Aorta (tissue), 5 donors: ENCODE measurements at regions of chr11 and their contacts with region 1.

Region 1: DNA sequence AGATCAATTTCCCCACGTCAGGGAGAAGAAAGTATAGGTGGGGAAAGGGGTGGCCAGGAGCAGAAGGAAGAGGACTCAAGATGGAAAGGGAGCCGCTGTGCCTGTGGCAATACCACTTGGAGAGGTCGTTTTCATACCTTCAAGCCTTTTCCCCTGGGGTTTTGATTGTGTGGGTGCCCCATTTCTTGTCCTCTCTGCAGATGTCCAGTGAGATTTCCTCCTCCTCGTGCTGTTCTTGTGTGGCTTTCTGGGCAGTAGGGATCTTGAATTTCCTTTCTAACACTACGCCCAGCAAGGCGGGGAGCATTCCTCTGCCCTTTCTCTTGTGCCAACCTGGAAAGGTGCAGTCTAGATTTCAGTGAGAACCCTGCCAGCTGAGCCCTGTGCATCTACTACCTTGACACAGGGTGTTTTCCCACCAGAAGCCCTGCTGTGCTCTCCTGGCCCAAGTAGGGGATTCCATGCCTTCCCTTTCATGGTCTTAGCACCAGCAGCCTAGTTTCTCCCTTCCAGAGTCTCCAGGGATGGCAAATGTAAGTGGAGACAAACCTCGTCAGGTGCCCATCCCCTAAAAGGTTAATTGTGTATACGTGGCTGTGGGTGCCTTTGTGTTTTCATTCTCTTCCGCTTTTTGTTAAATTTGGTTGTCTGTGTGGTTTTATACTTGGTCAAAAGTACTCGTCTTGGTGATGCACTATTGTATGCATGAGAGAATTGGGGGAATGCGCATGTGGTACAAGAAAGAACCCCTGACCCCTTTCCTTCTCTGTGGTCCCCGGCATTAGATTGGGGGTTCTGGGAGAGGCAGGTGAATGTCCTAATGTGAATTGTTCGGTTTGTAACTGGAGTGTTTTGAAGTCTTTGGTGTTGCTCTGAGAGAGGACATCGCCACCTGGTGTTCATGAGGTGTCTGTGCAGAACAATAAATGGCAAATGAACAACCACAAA is 71.4 kb upstream of the MPEG1 start:
- DNase-seq: no peak
- ATAC-seq: peak; percentile 85
- H3K4me3 ChIP-seq: no peak overlapping the region
- H3K27ac ChIP-seq: no peak overlapping the region
- H3K4me1 ChIP-seq: peaks cover 0 to 1% of the 10 kb centered on the region in 2 donors
- H3K27me3 ChIP-seq: no peaks in the 10 kb centered on the region

Region 2: DNA sequence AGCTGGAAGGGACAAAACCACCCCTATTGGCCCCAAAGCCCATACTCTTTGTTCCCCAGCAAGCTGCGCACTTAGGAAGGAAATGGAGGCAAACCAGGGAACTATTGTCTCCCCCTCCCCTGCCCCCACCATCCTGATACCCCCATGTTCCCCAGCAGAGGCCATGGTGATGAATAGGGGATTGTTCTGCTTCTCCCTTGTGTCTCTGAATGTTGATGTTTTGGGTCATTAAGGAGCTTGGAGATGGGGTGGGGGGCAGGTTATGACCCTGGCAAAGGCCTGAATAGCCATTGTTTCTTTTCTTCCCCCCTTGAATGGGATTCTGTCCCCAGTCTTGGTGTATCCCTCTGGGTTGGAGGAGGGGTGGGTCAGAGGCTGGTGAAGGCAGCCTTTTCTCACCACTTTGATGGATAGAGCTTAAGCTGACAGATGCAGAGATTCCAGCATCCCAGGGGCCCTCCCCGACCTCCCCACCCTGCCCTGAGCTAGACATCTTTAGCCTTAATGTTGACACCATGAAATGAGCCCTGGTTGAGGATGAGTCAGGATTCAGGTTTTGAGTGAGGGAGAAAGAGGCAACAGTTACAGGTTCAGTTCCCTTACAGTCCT is 103.8 kb before region 1 on chr11:
- intact Hi-C with region 1: no loop called
- DNase-seq: no peak
- ATAC-seq: no peak
- H3K4me3 ChIP-seq: no peak overlapping the region
- H3K27ac ChIP-seq: no peak overlapping the region
- H3K4me1 ChIP-seq: no peaks in the 10 kb centered on the region
- H3K27me3 ChIP-seq: no peaks in the 10 kb centered on the region

Region 3: GRCh38 chr11:59207988-59208451 is 76.1 kb before region 1 on chr11:
- intact Hi-C with region 1: loop called (anchors 5 kb)
- DNase-seq: no peak
- ATAC-seq: peak; percentile 71
- H3K4me3 ChIP-seq: no peak overlapping the region
- H3K27ac ChIP-seq: no peak overlapping the region
- H3K4me1 ChIP-seq: no peaks in the 10 kb centered on the region
- H3K27me3 ChIP-seq: no peaks in the 10 kb centered on the region